GM10248 (cell line): ENCODE measurements at regions of chr14 and their contacts with region 1.

Region 1: DNA sequence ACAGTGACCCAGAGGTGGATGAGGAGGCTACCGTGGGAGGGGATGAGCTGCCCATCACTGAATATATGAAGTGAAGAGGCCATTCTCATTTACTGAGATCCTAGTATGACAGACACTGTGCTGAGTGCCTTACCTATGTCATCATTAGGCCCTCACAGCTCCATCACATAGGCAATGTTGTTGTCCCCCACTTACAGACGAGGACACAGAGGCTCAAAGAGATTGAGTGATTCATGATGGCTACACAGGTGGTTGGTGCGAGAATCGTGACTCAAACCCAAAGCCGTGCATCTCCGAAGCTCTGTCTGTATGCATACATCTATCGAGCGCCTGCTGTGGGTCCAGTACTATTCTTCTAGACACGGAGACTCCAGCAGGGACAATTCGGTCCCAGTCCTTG is 5.9 kb upstream of the CCDC197 start:
- DNase-seq: no peak
- CTCF ChIP-seq: no peak

Region 2: DNA sequence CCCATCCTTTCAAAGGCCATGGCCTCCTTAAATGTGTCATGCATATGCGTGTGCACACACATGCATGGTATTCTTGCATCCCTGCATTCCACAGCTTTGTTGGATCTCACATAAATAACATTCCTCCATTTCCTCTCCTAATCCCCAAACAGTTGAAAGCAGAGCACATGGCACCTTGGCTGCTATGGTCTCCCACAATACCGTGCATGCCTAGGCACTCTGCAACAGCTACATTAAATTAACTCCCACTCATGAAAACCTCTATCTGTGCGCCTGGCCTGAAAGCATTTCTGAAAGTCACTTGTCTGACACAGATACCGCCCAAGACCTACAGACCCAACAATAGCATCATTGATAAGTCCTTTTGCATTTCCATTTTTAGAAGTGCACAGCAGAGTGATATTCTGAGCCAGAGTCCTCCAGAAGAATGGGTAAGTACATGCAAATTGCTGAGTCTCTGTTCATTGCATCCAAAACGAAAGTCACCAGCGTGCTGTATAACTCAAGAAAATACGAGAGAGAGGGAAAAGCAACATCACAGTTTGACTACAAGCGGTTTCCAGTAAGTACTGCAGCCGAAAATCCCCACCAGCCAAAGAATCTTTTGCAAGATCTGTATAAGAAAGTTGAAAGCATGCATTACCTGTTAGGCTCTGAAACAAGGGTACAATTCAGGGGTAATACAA is 15.3 kb before region 1 on chr14:
- CTCF ChIA-PET with region 1: interaction called, 124 read pairs
- POLR2A ChIA-PET with region 1: interaction called, 6 read pairs
- DNase-seq: peak; percentile 80
- CTCF ChIP-seq: no peak